Common myeloid progenitor, CD34-positive (primary cell): ENCODE measurements at regions of chr2 and their contacts with region 1.

Region 1: GRCh38 chr2:70948337-70949003 is 12.8 kb downstream of the ATP6V1B1 start:
- DNase-seq: peak; percentile 70 to 79 (median 74)
- H3K4me3 ChIP-seq: peak overlapping the region in 4 of 7 experiments; percentile 33 to 65 (median 40)
- H3K27ac ChIP-seq: no peak overlapping the region
- H3K4me1 ChIP-seq: peaks cover 0 to 18% (median 9%) of the 10 kb centered on the region in 4 experiments
- H3K27me3 ChIP-seq: peaks cover 3 to 16% (median 11%) of the 10 kb centered on the region in 5 experiments

Region 2: DNA sequence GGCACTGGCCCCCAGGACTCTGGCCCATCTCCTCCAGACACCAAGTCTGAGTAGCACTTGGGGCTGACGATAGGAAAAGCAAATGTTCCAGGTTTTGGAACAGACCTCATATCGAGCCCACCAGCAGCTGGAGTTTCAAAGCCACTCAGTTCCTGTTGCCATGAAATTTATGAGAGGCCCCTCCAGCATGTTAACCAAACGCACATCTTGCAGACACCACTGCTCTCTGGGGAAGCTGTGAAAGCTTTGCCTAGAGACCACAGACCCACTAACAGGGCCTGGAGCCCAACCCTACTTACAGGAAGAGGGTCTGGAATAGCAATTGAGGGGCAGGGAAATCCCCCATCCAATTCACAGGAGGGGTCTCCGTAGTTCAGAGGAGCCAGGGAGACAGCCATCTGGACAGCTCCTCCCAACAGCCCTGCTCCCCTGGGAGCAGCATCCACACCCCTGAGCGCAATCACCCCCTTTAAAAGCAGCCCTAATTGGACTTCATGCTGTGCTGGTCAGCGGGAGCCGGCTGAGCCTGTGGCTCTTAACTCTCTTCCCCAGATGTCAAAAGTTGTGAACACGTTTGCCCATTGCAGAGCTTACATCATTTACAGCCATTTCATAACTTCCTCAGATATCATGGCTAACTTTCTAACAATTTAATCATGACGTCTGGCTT is 476.1 kb before region 1 on chr2:
- CTCF ChIA-PET with region 1: no interaction called
- POLR2A ChIA-PET with region 1: no interaction called
- DNase-seq: peak; percentile 15 to 76 (median 66)
- H3K4me3 ChIP-seq: no peak overlapping the region
- H3K27ac ChIP-seq: peak overlapping the region in 1 of 2 experiments; percentile 11
- H3K4me1 ChIP-seq: peaks cover 34 to 76% (median 62%) of the 10 kb centered on the region in 4 experiments
- H3K27me3 ChIP-seq: no peaks in the 10 kb centered on the region

Region 3: DNA sequence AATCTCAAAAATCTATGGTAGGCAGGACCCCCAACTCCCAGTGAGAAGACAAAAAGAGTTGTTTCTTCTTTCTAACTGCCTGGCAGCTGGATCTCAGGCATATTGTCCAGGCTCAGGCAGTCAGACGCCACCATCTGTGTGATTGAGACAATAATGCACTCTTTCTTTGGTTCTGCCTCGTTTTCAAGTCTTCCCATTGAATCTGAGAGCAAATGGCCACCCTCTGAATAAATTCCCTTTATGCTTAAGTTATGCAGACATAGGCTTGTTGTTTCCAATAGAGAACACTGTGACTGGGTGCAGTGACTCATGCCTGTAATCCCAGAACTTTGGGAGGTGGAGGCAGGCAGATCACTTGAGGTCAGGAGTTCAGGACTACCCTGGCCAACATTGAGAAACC is 97.5 kb before region 1 on chr2:
- CTCF ChIA-PET with region 1: interaction called, 11 read pairs
- POLR2A ChIA-PET with region 1: no interaction called
- DNase-seq: no peak
- H3K4me3 ChIP-seq: no peak overlapping the region
- H3K27ac ChIP-seq: no peak overlapping the region
- H3K4me1 ChIP-seq: peaks cover 0 to 13% (median 0%) of the 10 kb centered on the region in 4 experiments
- H3K27me3 ChIP-seq: peaks cover 0 to 4% (median 0%) of the 10 kb centered on the region in 5 experiments

Region 4: DNA sequence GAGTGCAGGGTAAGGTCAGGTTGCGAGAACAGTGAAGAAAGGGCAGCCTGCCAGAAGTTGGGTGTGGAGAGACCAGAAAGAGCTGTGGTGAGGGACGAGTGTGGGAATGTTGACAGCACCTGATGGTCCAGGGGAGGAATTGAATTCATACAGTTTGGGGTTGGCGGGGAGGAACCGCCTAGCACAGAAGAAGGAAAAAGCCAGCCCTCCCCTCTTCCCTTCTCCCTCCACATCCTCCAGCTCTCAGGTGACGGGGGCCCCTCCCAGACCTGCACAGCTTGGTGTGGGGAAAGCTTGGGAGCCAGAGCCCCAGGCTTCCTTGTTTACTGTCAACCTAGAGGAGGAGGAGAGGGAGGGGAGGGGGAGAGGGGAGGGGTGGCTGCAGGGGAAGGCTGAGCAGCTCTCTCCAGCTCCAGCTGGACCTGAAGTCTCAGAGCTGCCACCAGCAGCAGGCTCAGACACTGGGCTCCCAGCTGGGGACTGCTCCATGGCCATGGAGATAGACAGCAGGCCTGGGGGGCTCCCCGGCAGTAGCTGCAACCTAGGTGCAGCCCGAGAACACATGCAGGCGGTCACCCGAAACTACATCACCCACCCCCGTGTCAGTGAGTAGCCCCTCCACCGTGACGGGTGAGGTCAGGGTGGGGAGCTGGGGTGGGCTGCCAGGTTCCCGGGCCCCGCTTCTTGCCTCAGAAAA is 12.9 kb before region 1 on chr2 and contains the start of gene ATP6V1B1:
- CTCF ChIA-PET with region 1: interaction called, 36 read pairs
- POLR2A ChIA-PET with region 1: no interaction called
- DNase-seq: no peak
- H3K4me3 ChIP-seq: no peak within 1 kb of the TSS
- H3K27ac ChIP-seq: no peak within 1 kb of the TSS
- H3K4me1 ChIP-seq: peaks cover 0 to 2% (median 0%) of the 10 kb centered on the region in 4 experiments
- H3K27me3 ChIP-seq: peaks cover 0 to 33% (median 17%) of the 10 kb centered on the region in 5 experiments